ENCODE measurements at regions of chr1 and their contacts with region 1.

Region 1: DNA sequence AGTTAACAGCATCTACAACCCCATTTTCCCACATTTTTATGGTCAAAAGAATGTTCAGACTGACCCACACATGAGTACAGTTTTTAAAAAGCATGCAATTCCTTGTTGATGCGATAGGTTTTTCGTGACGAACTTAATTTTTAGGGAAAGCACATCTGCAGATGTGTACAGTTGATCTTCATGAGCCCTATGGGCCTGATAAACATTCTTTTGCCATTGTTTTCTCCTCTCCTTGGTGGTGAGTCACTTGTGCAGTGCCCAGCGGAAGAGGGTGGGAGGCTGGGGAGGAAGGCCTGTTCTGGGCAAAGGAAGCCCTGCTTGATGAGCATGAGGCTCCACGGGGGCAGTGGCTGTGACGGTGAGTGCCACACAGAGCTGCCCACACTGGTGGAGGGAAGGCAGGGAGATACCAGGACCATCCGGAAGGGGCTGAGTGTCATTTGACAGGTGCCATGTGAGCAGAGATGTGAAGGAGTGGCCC is 5.3 kb downstream of the ARF1 start:
- DNase-seq: no peak
- H3K4me3 ChIP-seq: no peak overlapping the region
- H3K27ac ChIP-seq: no peak overlapping the region
- H3K4me1 ChIP-seq: peaks cover 4 to 15% (median 10%) of the 10 kb centered on the region in 4 experiments
- H3K27me3 ChIP-seq: no peaks in the 10 kb centered on the region
- CTCF ChIP-seq: no peak
- EP300 ChIP-seq: no peak
- POLR2A ChIP-seq: no peak
- RAD21 ChIP-seq: no peak

Region 2: DNA sequence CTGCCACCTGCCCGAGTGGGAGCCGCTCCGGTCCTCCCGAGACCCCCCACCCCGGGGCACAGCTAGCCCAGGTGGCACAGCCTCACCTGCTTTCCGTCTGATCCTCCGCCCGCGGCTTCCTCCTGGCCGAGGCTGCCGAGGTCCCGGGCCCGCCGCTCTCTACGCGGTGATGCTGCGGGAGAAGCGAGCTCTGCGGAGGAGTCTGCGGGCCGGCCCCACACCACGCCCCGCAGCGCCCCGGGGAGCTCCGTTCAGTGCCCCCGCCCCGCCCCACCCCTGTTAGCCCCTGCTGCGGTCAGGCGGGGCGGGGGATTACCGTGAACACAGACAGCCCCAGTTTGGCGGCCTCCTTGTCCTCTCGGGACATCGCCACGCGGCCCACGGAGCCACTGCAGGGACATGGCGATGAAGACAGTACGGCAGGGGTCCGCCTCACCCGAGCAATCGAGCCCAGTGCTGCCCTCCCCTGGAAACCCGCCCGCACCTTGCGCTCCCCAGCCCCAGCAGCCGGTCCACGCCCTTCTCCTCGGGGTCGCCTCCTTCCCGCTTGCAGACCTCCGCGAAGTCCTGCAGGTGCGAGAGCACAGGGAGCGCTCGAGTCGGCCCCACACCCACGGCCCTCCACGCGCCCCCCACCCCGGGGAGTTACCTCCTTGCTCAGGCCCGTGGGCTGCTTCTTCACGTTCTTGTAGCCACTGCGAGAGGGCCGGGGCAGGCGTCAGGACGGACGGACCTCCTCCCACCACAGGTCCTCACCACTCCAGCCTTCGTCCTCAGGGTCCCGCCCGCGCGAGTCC is 14.4 kb after region 1 on chr1:
- CTCF ChIA-PET with region 1: interaction called, 13 read pairs
- POLR2A ChIA-PET with region 1: interaction called, 53 read pairs
- DNase-seq: peak in 1 of 2 experiments; percentile 66
- H3K4me3 ChIP-seq: peak overlapping the region; percentile 63 to 92 (median 77)
- H3K27ac ChIP-seq: no peak overlapping the region
- H3K4me1 ChIP-seq: peaks cover 0 to 2% (median 0%) of the 10 kb centered on the region in 4 experiments; a peak in 1 of 7 replicates
- H3K27me3 ChIP-seq: no peaks in the 10 kb centered on the region; a peak in 1 of 7 replicates
- CTCF ChIP-seq: peak in 2 of 3 experiments; percentile 29 to 39; a peak in 2 of 4 replicates
- EP300 ChIP-seq: no peak
- POLR2A ChIP-seq: no peak
- RAD21 ChIP-seq: peak in 1 of 2 experiments; percentile 12; a peak in 1 of 4 replicates

Region 3: GRCh38 chr1:228306275-228307217 is 218.7 kb after region 1 on chr1:
- CTCF ChIA-PET with region 1: no interaction called
- POLR2A ChIA-PET with region 1: no interaction called
- DNase-seq: no peak
- H3K4me3 ChIP-seq: no peak overlapping the region
- H3K27ac ChIP-seq: no peak overlapping the region
- H3K4me1 ChIP-seq: no peaks in the 10 kb centered on the region
- H3K27me3 ChIP-seq: no peaks in the 10 kb centered on the region; a peak in 1 of 7 replicates
- CTCF ChIP-seq: no peak
- EP300 ChIP-seq: no peak
- POLR2A ChIP-seq: no peak
- RAD21 ChIP-seq: no peak

Region 4: DNA sequence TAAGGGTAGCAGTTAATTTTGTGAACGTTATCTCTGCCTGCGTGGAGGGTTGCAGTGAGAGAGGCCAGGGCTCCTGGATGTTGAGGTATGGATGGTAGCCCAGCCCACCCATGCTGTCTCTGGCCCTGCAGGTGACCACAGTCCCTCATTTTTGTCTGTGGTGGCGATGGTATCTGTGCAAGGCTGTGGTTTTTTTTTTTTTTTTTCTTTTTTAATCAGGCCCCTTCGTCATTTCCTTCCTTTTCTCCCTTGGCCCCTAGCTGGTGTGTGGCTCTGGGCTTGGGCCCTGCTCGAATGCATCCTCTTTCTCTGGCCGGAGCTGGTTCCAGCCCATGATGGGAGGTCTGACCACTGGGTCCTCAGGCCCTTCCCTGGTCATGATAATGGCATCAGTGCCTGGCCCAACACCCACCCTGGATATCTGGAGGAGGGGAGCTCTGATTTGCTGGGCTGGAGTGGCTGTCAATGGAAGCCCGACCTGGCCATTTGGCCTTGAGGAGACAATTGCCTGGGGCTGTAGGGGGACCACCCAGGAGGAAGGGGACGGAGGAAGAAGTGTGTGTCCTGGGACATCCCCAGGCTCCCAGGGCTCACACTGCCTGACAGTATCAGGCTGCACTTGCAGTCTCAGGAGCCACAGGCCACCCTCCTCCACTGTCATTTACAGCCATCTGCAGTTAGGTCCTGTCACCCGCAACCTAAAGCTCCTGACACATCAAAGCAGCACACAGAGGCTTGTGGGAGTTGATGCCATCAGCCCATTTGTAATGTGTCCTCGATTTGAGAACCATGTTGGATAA is 391.3 kb after region 1 on chr1:
- CTCF ChIA-PET with region 1: no interaction called
- POLR2A ChIA-PET with region 1: no interaction called
- DNase-seq: peak in 1 of 2 experiments; percentile 63
- H3K4me3 ChIP-seq: peak overlapping the region in 1 of 4 experiments; percentile 44; a peak in 1 of 8 replicates
- H3K27ac ChIP-seq: no peak overlapping the region
- H3K4me1 ChIP-seq: peaks cover 3 to 26% (median 19%) of the 10 kb centered on the region in 4 experiments
- H3K27me3 ChIP-seq: no peaks in the 10 kb centered on the region
- CTCF ChIP-seq: no peak
- EP300 ChIP-seq: no peak
- POLR2A ChIP-seq: no peak
- RAD21 ChIP-seq: no peak

Measured in H1 (cell line).